Naive thymus-derived CD8-positive, alpha-beta T cell (primary cell): ENCODE measurements at regions of chr10 and their contacts with region 1.

Region 1: GRCh38 chr10:102408728-102409603 is 9.6 kb downstream of the PSD start:
- DNase-seq: peak in 9 of 10 donors; percentile 60 to 91 (median 81)
- ATAC-seq: peak; percentile 75 to 81
- H3K4me3 Mint-ChIP-seq: peak overlapping the region; percentile 71 to 91 (median 86)
- H3K27ac Mint-ChIP-seq: peak overlapping the region; percentile 64 to 96 (median 89)
- H3K4me1 Mint-ChIP-seq: peaks cover 28 to 57% (median 40%) of the 10 kb centered on the region in 4 donors
- H3K27me3 Mint-ChIP-seq: peaks cover 0 to 27% (median 0%) of the 10 kb centered on the region in 5 donors

Region 2: GRCh38 chr10:102310361-102311024 is 98.5 kb before region 1 on chr10:
- POLR2A ChIA-PET with region 1: no interaction called
- DNase-seq: no peak
- ATAC-seq: no peak
- H3K4me3 Mint-ChIP-seq: no peak overlapping the region
- H3K27ac Mint-ChIP-seq: peak overlapping the region in 1 of 10 donors; percentile 10
- H3K4me1 Mint-ChIP-seq: peaks cover 17 to 57% (median 41%) of the 10 kb centered on the region in 4 donors
- H3K27me3 Mint-ChIP-seq: no peaks in the 10 kb centered on the region

Region 3: DNA sequence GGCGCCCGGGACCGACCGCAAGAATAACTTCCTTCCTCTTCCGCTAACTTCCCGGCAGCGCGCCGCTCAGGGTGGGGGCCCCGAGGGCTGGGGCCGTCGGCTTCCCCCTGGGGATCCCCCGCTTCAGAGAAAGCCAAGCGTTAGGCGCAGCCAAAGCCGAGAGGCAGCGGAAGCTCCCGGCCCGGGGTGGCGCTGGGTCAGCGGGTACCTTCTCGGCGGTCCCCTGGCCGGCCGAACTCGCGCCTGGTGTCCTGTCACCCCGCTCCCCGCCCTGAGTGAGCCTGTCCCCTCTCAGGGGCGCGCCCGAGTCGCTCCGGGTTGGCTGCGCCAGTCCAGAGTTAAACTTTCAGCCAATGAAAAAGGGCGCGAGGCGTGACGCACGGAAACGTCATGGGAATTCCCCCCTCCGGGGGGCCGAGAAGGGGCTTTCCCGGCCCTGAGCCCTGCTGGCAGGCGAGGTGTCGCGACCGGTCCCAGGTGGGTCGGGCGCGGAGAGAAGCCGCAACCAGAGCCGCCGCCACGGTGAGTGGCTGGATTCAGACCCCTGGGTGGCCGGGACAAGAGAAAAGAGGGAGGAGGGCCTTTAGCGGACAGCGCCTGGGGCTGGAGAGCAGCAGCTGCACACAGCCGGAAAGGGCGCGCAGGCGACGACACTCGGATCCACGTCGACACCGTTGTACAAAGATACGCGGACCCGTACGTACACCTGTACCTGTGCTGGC is 14.7 kb before region 1 on chr10:
- POLR2A ChIA-PET with region 1: interaction called, 64 read pairs
- DNase-seq: peak; percentile 96 to 100 (median 99)
- ATAC-seq: peak; percentile 77 to 80
- H3K4me3 Mint-ChIP-seq: peak overlapping the region; percentile 93 to 98 (median 96)
- H3K27ac Mint-ChIP-seq: peak overlapping the region; percentile 92 to 100 (median 100)
- H3K4me1 Mint-ChIP-seq: peaks cover 13 to 46% (median 41%) of the 10 kb centered on the region in 4 donors
- H3K27me3 Mint-ChIP-seq: no peaks in the 10 kb centered on the region

Region 4: GRCh38 chr10:102461187-102462054 is 52.5 kb after region 1 on chr10:
- POLR2A ChIA-PET with region 1: interaction called, 10 read pairs
- DNase-seq: peak; percentile 85 to 95 (median 90)
- ATAC-seq: peak; percentile 99 to 100
- H3K4me3 Mint-ChIP-seq: peak overlapping the region; percentile 86 to 98 (median 92)
- H3K27ac Mint-ChIP-seq: peak overlapping the region; percentile 73 to 93 (median 86)
- H3K4me1 Mint-ChIP-seq: peaks cover 28 to 44% (median 32%) of the 10 kb centered on the region in 4 donors
- H3K27me3 Mint-ChIP-seq: peaks cover 0 to 1% (median 0%) of the 10 kb centered on the region in 5 donors